ENCODE measurements at regions of chr17 and their contacts with region 1.

Region 1: DNA sequence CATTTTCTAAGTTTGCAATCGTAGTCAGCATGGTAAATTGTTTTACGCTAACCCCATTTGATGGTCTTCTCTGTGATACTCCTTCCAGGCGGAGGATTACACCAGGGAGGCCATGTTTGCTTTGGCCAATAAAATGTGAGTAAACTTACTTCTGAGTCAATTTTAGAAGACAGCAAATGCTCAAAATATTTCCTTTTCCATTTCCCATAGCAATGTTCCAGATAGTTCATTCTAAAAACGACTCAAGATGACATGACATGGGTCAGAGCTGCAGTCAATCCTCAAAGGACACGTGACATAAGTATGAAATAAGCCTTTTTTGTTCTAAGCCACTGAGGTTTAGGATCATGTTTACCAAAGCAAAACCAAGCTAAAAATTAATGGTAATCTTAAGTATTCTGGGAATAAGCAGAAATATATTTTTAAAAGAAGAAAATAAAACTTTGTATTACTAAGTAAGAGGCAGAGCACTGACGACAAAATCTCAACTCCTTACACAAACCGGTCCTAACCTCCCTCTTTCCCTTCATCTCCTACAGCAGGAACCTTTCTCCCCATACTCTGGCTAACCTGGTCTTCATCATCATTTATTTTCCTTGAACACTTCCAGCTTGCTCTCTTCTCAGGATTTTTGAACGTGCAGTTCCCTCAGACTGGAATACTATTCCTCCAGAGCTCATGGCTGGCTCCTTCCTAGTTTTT is 266.2 kb downstream of the CEP112 start:
- DNase-seq: peak; percentile 89
- ATAC-seq: peak; percentile 96
- H3K4me3 ChIP-seq: no peak overlapping the region
- H3K27ac ChIP-seq: peak overlapping the region; percentile 82
- H3K4me1 ChIP-seq: peaks cover 16% of the 10 kb centered on the region
- H3K27me3 ChIP-seq: no peaks in the 10 kb centered on the region
- CTCF ChIP-seq: no peak

Region 2: GRCh38 chr17:65813306-65813705 is 112.5 kb before region 1 on chr17:
- CTCF ChIA-PET with region 1: no interaction called
- POLR2A ChIA-PET with region 1: no interaction called
- intact Hi-C with region 1: loop called (anchors 5 kb)
- DNase-seq: no peak
- ATAC-seq: no peak
- H3K4me3 ChIP-seq: no peak overlapping the region
- H3K27ac ChIP-seq: no peak overlapping the region
- H3K4me1 ChIP-seq: no peaks in the 10 kb centered on the region
- H3K27me3 ChIP-seq: no peaks in the 10 kb centered on the region
- CTCF ChIP-seq: no peak

Region 3: GRCh38 chr17:65855249-65855648 is 70.5 kb before region 1 on chr17:
- CTCF ChIA-PET with region 1: no interaction called
- POLR2A ChIA-PET with region 1: no interaction called
- intact Hi-C with region 1: loop called (anchors 5 kb)
- DNase-seq: peak; percentile 98
- ATAC-seq: peak; percentile 73
- H3K4me3 ChIP-seq: peak overlapping the region; percentile 10; the same call in 1 of the 2 replicates
- H3K27ac ChIP-seq: peak overlapping the region; percentile 88
- H3K4me1 ChIP-seq: peaks cover 47% of the 10 kb centered on the region
- H3K27me3 ChIP-seq: no peaks in the 10 kb centered on the region
- CTCF ChIP-seq: no peak

Region 4: GRCh38 chr17:66021768-66022167 is 96.0 kb after region 1 on chr17:
- CTCF ChIA-PET with region 1: no interaction called
- POLR2A ChIA-PET with region 1: no interaction called
- intact Hi-C with region 1: no loop called
- DNase-seq: peak; percentile 4
- ATAC-seq: no peak
- H3K4me3 ChIP-seq: no peak overlapping the region
- H3K27ac ChIP-seq: no peak overlapping the region
- H3K4me1 ChIP-seq: no peaks in the 10 kb centered on the region
- H3K27me3 ChIP-seq: no peaks in the 10 kb centered on the region
- CTCF ChIP-seq: peak; percentile 36; the same call in 1 of the 2 replicates